Lower lobe of right lung (tissue), 2 donors: ENCODE measurements at regions of chr1 and their contacts with region 1.

Region 1: GRCh38 chr1:162878000-162878596 is 17.1 kb upstream of the CCDC190 start:
- DNase-seq: no peak
- ATAC-seq: peak; percentile 47 to 79
- H3K4me3 ChIP-seq: no peak overlapping the region
- H3K27ac ChIP-seq: no peak overlapping the region
- H3K4me1 ChIP-seq: no peaks in the 10 kb centered on the region
- H3K27me3 ChIP-seq: no peaks in the 10 kb centered on the region
- CTCF ChIP-seq: peak; percentile 61

Region 2: DNA sequence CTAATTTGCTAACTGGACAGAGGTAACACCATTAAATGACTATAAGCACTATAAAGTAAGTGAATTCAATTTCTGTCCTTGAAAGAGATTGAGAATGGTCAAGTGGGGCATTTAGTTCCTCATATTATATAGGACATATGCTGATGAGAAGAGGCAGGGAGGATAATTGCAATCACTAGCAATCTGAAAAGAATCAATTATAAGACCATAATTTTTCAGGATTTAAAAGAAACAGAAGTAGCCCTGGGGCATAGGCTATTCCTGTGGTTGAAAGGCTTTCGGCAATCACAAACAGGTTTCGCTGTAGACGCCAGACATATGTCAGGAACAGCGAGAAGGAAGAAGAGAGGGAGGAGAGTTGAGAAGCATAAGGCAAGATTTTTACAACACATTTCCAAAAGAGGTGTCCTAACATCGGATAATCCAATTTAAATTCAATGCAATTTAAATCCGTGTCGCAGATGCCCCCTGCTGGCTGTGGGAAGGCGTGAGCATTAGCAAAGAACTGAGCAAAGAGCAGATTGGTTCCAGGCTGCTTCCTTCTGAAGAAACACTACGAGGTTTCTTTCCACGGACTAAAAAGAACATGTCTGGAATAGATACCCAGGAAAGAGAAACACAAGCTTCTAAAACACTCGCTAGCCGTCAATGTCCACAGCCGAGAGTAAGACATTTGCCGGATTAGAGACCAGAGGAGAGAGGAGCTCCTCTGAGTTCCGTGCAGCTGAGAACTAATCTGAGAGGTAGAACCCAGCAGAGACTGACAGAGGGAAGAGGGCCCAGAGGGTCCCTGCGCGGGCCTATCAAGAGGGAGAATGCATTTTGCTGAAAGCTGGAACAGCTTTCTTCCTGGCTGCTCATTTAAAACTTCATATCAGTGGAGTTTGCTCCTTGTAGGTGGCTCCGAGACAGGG is 296.7 kb after region 1 on chr1:
- intact Hi-C with region 1: loop called (anchors 10 kb)
- DNase-seq: peak; percentile 58
- ATAC-seq: peak in 1 of 2 donors; percentile 60
- H3K4me3 ChIP-seq: no peak overlapping the region
- H3K27ac ChIP-seq: no peak overlapping the region
- H3K4me1 ChIP-seq: peaks cover 19% of the 10 kb centered on the region
- H3K27me3 ChIP-seq: no peaks in the 10 kb centered on the region
- CTCF ChIP-seq: peak; percentile 86

Region 3: GRCh38 chr1:163315773-163316374 is 437.8 kb after region 1 on chr1:
- intact Hi-C with region 1: loop called (anchors 5 kb)
- DNase-seq: no peak
- ATAC-seq: no peak
- H3K4me3 ChIP-seq: no peak overlapping the region
- H3K27ac ChIP-seq: no peak overlapping the region
- H3K4me1 ChIP-seq: peaks cover 4% of the 10 kb centered on the region
- H3K27me3 ChIP-seq: no peaks in the 10 kb centered on the region
- CTCF ChIP-seq: peak; percentile 64